ENCODE measurements at regions of chr12 and their contacts with region 1.

Region 1: DNA sequence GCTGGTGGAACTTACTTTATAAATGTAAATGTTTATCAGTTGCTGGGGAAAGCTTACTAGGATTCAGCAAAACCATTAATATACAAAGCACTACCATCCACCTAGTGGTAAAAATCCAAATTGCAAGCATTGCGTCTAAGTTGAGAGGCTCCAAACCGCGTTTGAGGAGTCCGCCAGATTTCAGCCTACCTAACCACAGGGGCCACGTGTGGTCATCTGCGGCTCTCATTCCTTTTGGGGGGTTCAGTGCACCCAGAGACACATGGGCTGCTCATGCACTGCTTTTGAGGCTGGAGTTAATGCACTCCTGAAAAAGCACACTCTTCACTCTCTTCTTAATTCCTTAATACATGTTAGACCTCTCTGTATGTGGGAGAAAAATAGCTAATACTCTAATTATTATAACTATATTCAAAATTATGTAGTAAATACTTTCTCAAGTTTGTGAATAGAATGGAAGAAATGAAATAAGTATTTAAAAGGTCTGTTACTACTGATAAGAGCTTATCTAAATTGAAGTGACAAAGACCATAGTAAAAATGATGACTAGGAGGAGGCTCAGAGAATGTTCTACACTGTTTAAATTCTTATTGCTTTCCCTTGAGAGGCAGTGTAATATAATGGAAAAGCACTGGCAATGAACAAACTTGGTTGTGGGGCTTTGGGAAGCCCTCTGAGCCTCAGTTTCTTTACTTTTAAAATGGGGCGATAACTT is 41.4 kb upstream of the MANSC4 start:
- DNase-seq: peak in 1 of 3 donors; percentile 17
- ATAC-seq: peak; percentile 91 to 96 (median 95)
- H3K4me3 ChIP-seq: no peak overlapping the region
- H3K27ac ChIP-seq: no peak overlapping the region
- H3K4me1 ChIP-seq: no peaks in the 10 kb centered on the region
- H3K27me3 ChIP-seq: no peaks in the 10 kb centered on the region
- CTCF ChIP-seq: peak; percentile 77 to 81 (median 78)
- POLR2A ChIP-seq: no peak

Region 2: DNA sequence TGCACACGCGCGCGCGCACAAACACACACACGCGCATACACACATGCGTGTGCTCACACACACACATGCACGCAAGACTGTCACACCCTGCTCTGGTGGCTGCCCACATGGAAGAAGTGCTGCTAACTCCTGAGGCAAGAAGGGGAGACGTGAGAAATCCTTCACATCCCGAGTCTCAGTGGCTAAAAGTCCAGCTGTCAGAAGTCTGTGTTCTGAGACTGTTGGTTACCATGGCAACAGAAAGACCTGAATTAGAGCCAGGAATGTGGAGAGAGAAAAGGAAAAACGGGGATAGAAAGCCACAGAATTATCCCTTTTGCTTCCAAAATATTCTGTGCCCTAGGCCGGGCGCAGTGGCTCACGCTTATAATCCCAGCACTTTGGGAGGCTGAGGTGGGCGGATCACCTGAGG is 226.2 kb before region 1 on chr12:
- intact Hi-C with region 1: no loop called
- DNase-seq: no peak
- ATAC-seq: peak; percentile 16 to 50 (median 44)
- H3K4me3 ChIP-seq: no peak overlapping the region
- H3K27ac ChIP-seq: no peak overlapping the region
- H3K4me1 ChIP-seq: peaks cover 0 to 3% (median 0%) of the 10 kb centered on the region in 4 donors
- H3K27me3 ChIP-seq: no peaks in the 10 kb centered on the region
- CTCF ChIP-seq: no peak
- POLR2A ChIP-seq: no peak

Region 3: DNA sequence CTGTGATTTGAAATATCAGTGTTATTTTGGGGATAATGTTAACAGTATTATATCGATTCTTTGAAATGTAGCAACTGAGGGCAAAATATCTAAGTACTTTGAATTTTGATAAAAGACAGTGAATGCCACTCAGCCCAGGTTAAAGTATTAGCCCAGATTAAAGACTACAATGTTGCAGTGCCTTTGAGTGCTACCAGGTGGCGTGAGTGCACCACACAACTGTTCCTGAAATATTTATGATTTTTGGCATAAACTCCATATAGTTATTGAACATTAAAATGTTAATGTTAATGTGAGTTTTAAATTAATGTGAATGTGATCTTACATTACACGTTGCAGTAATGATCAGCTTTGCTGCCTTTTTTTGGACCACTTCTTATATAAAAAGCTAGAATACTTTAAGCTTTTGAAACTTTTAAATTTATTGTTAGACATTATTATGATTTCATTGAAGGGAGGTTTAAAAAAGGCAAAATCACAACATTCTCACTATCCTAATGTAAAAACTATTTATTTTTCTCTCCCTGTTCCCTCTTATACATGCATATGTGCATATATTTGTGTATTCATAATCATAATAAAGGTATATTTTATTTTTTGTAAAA is 88.3 kb before region 1 on chr12:
- intact Hi-C with region 1: loop called in 1 of 2 experiments (anchors 5 kb)
- DNase-seq: no peak
- ATAC-seq: peak; percentile 89 to 90 (median 89)
- H3K4me3 ChIP-seq: no peak overlapping the region
- H3K27ac ChIP-seq: no peak overlapping the region
- H3K4me1 ChIP-seq: no peaks in the 10 kb centered on the region
- H3K27me3 ChIP-seq: no peaks in the 10 kb centered on the region
- CTCF ChIP-seq: peak; percentile 80 to 93 (median 83)
- POLR2A ChIP-seq: no peak

Measured in right lobe of liver (tissue), 6 donors.